WTC11 (cell line): ENCODE measurements at regions of chr5 and their contacts with region 1.

Region 1: DNA sequence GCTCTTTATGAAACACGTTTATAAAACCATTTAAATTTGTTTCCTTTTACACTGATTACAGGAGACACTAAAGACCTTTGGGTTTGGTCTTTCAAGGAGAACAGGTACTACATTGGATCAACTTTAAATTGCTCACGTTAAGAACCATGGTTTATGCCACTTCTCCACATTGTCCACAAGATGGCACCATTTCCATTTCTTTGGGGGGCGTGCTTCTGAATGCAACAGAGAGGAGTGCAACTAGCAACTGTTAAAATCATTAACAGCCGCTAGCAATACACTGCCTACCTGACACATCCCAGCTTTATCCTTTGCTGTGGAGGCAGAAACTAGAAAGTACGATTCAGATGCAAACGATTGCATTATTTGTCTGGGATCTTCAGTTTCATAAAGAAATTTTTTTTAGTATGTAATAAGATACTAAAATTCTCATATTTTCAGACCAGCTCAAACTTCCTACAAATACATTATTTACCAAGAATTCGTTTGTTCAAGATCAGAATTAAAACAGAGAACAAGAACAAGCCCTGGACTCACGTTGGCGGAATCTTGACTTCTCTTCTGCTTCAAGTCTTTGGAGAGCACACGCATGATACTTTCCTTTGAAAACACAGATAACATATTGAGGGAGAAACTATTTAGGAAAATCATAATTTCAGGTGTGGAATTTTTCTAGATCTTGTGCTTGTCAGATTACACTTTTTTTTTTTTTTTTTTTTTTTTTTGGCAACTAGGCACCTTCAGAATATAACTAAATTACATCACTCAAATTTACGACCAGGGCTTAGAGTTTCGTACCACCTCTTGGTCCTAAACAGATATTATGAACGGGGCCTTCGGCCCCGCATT is 702 bp downstream of the CDC20B start:
- DNase-seq: peak; percentile 26
- ATAC-seq: peak; percentile 9
- H3K4me3 Mint-ChIP-seq: peak overlapping the region; percentile 74
- H3K27ac Mint-ChIP-seq: no peak overlapping the region
- H3K4me1 Mint-ChIP-seq: peaks cover 33% of the 10 kb centered on the region
- H3K27me3 Mint-ChIP-seq: peaks cover 66% of the 10 kb centered on the region
- CTCF ChIP-seq: peak; percentile 56

Region 2: GRCh38 chr5:55187370-55187769 is 15.1 kb after region 1 on chr5:
- CTCF ChIA-PET with region 1: interaction called, 12 read pairs
- POLR2A ChIA-PET with region 1: no interaction called
- DNase-seq: no peak
- ATAC-seq: peak; percentile 60
- H3K4me3 Mint-ChIP-seq: no peak overlapping the region
- H3K27ac Mint-ChIP-seq: no peak overlapping the region
- H3K4me1 Mint-ChIP-seq: no peaks in the 10 kb centered on the region
- H3K27me3 Mint-ChIP-seq: peaks cover 61% of the 10 kb centered on the region
- CTCF ChIP-seq: no peak

Region 3: DNA sequence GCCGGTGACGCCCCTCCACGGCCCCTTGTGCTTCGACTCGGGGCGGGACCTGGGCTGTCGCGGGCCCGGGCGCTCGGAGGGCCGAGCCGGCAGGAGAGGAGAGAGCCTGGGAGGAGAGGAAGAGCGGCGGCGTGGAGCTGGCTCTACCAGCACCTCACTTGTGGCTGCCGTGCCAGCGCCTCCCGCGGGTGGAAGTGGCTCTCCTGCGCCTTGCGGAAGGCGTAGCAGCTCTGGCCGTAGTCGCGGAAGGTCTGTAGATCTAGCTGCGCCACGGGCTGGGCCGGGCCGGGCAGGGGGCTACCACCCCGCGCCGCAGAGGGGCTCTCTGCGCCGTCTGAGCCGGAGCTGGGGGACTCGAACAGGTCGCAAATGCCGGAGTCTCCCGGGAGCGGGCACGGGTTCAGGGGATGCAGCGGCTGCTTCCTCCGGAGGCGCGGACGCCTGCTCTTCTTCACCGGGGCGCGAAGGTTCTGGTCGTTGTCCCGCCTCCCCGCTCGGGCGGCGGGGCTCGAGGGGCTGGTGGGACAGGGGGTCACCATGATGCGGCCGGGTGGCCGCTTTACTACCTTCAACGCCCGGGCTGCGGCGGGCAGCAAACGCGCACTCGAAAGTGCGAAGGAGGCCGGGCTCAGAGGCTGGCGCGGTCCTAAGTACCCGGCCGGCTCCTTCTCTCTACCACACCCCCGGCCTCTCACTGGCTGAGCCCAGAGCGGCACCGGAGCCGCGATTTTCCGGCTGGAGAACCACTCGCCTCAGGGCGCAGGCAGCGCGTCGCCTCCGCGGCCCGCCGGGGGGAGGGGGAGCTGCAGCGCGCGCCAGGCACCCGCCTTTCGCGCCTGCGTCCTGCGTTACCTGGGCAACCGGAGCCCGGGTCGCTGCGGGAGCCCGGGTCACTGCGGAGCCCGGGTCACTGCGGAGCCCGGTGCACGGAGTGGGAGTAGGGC is 61.0 kb after region 1 on chr5 and contains the start of gene CCNO:
- CTCF ChIA-PET with region 1: interaction called, 48 read pairs
- POLR2A ChIA-PET with region 1: interaction called, 7 read pairs
- DNase-seq: peak; percentile 84
- ATAC-seq: peak; percentile 80
- H3K4me3 Mint-ChIP-seq: peak within 1 kb of the TSS; percentile 86
- H3K27ac Mint-ChIP-seq: no peak within 1 kb of the TSS
- H3K4me1 Mint-ChIP-seq: peaks cover 29% of the 10 kb centered on the region
- H3K27me3 Mint-ChIP-seq: peaks cover 98% of the 10 kb centered on the region
- CTCF ChIP-seq: no peak
- total RNA-seq, gene CCNO: 0.14 to 0.44 TPM (median 0.24 TPM) in 3 replicates

Region 4: DNA sequence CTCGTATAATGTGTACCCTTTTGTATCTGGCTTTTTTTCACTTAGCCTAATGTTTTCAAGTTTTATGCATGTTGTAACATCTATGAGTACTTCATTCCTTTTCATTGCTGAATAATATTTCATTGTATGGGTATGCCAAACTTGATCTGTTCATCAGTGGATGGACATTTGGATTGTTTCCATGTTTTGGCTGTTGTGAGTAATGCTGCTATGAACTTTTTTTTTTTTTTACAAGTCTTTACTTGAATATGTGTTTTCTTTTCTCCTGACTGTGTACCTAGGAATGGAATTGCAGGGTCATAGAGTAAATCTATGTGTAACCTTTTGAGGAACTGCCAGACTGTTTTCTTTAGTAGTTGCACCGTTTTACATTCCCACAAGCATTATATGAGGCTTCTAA is 187.9 kb after region 1 on chr5:
- CTCF ChIA-PET with region 1: no interaction called
- POLR2A ChIA-PET with region 1: no interaction called
- DNase-seq: no peak
- ATAC-seq: no peak
- H3K4me3 Mint-ChIP-seq: no peak overlapping the region
- H3K27ac Mint-ChIP-seq: no peak overlapping the region
- H3K4me1 Mint-ChIP-seq: no peaks in the 10 kb centered on the region
- H3K27me3 Mint-ChIP-seq: no peaks in the 10 kb centered on the region
- CTCF ChIP-seq: no peak